IMR-90 (cell line): ENCODE measurements at regions of chr7 and their contacts with region 1.

Region 1: GRCh38 chr7:133582766-133583523 is 330.1 kb downstream of the EXOC4 start:
- DNase-seq: peak; percentile 91
- ATAC-seq: peak; percentile 93
- H3K4me3 ChIP-seq: no peak overlapping the region
- H3K27ac ChIP-seq: peak overlapping the region; percentile 100
- H3K4me1 ChIP-seq: peaks cover 13% of the 10 kb centered on the region
- H3K27me3 ChIP-seq: no peaks in the 10 kb centered on the region
- CTCF ChIP-seq: no peak
- POLR2A ChIP-seq: no peak
- RAD21 ChIP-seq: no peak

Region 2: DNA sequence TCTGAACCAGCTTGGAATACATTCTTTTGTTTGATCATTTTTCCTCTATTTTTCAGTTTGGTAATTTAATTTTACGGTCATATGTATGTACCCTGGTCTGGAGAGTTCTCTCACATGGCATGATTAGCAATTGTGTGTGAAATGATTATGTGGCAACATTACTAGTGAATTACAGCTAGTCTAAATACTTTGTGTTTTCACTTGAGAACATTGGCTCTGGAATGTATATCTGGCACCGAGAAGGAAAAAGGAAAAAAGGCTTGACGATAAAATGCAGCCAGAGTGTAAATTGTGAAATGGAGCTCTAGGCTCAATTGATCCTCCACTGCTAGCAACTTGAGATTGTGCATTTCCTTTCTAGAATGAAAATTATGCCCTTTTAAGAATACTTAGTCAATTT is 67.1 kb after region 1 on chr7:
- CTCF ChIA-PET with region 1: no interaction called
- POLR2A ChIA-PET with region 1: no interaction called
- dilution Hi-C with region 1: no loop called
- in situ Hi-C with region 1: no loop called
- intact Hi-C with region 1: loop called (anchors 5 kb)
- DNase-seq: peak; percentile 69
- ATAC-seq: peak; percentile 64
- H3K4me3 ChIP-seq: no peak overlapping the region
- H3K27ac ChIP-seq: no peak overlapping the region
- H3K4me1 ChIP-seq: peaks cover 4% of the 10 kb centered on the region
- H3K27me3 ChIP-seq: no peaks in the 10 kb centered on the region
- CTCF ChIP-seq: no peak
- POLR2A ChIP-seq: no peak
- RAD21 ChIP-seq: no peak

Region 3: GRCh38 chr7:134031835-134032617 is 449.1 kb after region 1 on chr7:
- CTCF ChIA-PET with region 1: no interaction called
- POLR2A ChIA-PET with region 1: no interaction called
- dilution Hi-C with region 1: no loop called
- in situ Hi-C with region 1: no loop called
- intact Hi-C with region 1: no loop called
- DNase-seq: peak; percentile 4
- ATAC-seq: no peak
- H3K4me3 ChIP-seq: no peak overlapping the region
- H3K27ac ChIP-seq: no peak overlapping the region
- H3K4me1 ChIP-seq: no peaks in the 10 kb centered on the region
- H3K27me3 ChIP-seq: no peaks in the 10 kb centered on the region
- CTCF ChIP-seq: peak; percentile 18; the same call in 1 of the 2 replicates
- POLR2A ChIP-seq: no peak
- RAD21 ChIP-seq: no peak